ENCODE measurements at regions of chr6 and their contacts with region 1.

Region 1: GRCh38 chr6:24581084-24581669 is 64.8 kb downstream of the KIAA0319 start:
- H3K4me3 Mint-ChIP-seq: no peak overlapping the region
- H3K27ac Mint-ChIP-seq: no peak overlapping the region
- H3K4me1 Mint-ChIP-seq: peaks cover 13% of the 10 kb centered on the region
- H3K27me3 Mint-ChIP-seq: no peaks in the 10 kb centered on the region

Region 2: GRCh38 chr6:24658573-24659511 is 77.7 kb after region 1 on chr6:
- intact Hi-C with region 1: no loop called
- H3K4me3 Mint-ChIP-seq: no peak overlapping the region
- H3K27ac Mint-ChIP-seq: peak overlapping the region; percentile 83
- H3K4me1 Mint-ChIP-seq: peaks cover 47% of the 10 kb centered on the region
- H3K27me3 Mint-ChIP-seq: no peaks in the 10 kb centered on the region

Region 3: DNA sequence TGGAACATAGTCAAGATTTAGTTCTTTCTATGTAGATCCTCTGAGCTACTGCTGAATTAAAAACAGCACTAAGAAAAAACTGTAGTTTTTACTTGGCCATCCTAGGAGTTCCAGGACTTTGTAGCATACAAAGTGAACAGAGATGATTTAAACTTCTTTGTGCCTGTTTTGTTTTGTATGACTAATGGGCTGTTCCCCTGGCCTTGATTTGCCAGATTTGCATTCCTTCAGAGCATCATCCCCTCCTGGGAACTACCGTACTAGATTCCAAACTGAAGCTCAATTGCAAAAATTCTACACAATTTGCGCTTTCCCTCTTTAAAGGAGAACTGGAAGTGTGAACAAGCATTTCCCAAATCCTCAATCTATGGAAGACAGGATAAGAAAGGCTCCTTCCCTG is 108.8 kb after region 1 on chr6:
- intact Hi-C with region 1: loop called (anchors 1 kb)
- H3K4me3 Mint-ChIP-seq: no peak overlapping the region
- H3K27ac Mint-ChIP-seq: no peak overlapping the region
- H3K4me1 Mint-ChIP-seq: peaks cover 13% of the 10 kb centered on the region
- H3K27me3 Mint-ChIP-seq: no peaks in the 10 kb centered on the region

Region 4: GRCh38 chr6:24766680-24767462 is 185.7 kb after region 1 on chr6:
- intact Hi-C with region 1: loop called (anchors 1 kb)
- H3K4me3 Mint-ChIP-seq: no peak overlapping the region
- H3K27ac Mint-ChIP-seq: no peak overlapping the region
- H3K4me1 Mint-ChIP-seq: peaks cover 12% of the 10 kb centered on the region
- H3K27me3 Mint-ChIP-seq: no peaks in the 10 kb centered on the region

Region 5: DNA sequence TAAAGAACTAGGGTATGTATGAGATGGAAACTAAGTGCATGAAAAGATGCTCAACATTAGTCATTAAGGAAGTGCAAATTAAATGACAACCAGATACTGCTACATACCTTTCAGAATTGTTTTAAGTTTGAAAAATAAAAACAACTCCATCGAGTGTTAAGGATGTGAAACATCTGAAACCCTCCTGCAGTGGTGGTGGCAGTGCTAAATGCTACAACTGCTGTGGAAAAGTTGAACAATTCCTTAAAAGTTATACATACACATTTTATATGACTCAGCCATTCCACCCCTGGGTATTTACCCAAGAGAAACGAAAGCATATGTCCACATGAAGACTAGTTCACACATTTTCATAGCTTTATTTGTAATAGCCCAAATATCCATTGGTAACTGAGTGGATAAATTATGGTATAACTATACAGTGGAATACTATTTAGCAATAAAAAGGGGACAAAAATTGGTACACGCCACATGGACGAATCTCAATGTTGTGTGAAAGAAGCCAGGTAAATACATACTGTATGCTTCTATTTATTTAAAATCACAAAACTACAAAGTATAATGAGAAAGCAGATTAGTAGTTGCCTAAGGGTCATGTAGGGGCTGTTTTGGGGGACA is 207.0 kb after region 1 on chr6:
- intact Hi-C with region 1: loop called (anchors 5 kb)
- H3K4me3 Mint-ChIP-seq: no peak overlapping the region
- H3K27ac Mint-ChIP-seq: no peak overlapping the region
- H3K4me1 Mint-ChIP-seq: no peaks in the 10 kb centered on the region
- H3K27me3 Mint-ChIP-seq: no peaks in the 10 kb centered on the region